Calu3 (cell line): ENCODE measurements at regions of chr3 and their contacts with region 1.

Region 1: DNA sequence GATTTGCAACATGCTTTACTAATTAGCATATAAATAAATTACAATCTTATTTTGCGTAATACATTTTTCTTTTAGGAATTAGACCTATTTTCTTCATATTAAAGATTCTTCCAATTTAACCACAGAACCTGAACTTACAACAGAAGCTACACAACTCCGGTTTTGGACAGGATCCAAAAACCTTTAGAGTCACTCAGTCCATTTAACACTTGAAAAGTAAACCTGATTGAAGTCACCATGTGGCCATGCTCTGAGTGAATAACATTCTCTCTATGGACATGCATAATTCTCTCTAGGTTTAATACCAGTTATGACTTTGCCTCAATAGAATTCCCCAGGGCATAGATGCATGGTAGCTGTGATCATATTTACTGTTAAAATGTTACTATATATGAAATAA is 751.0 kb downstream of the VGLL3 start:
- DNase-seq: no peak
- H3K4me3 Mint-ChIP-seq: no peak overlapping the region
- H3K27ac Mint-ChIP-seq: no peak overlapping the region
- H3K4me1 Mint-ChIP-seq: no peaks in the 10 kb centered on the region
- H3K27me3 Mint-ChIP-seq: no peaks in the 10 kb centered on the region
- CTCF ChIP-seq: no peak

Region 2: DNA sequence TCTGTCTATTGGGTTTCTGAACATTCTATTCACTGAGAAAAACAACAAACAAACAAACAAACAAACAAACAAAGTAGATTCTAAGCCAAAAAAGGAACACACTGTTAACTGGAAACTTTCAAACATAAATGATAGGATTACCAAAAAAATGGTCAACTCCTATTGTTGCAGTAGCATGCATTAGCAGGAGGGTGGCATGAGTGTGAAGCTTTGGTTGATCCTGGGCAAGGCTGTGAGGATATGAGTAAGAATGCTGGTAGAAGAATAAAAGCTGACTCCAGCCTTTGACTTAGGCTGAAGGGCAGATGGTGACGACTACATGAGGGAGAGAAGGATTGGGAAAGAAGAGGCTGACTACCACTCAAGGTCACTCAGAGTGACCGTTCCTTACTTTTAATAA is 59.2 kb before region 1 on chr3:
- CTCF ChIA-PET with region 1: no interaction called
- intact Hi-C with region 1: loop called (anchors 10 kb)
- DNase-seq: peak; percentile 39
- H3K4me3 Mint-ChIP-seq: no peak overlapping the region
- H3K27ac Mint-ChIP-seq: no peak overlapping the region
- H3K4me1 Mint-ChIP-seq: no peaks in the 10 kb centered on the region
- H3K27me3 Mint-ChIP-seq: no peaks in the 10 kb centered on the region
- CTCF ChIP-seq: no peak